BJ (cell line): ENCODE measurements at regions of chr14 and their contacts with region 1.

Region 1: GRCh38 chr14:22852940-22853767 is 16.8 kb downstream of the MMP14 start:
- DNase-seq: peak; percentile 25
- H3K4me3 ChIP-seq: peak overlapping the region; percentile 47
- H3K27me3 ChIP-seq: no peaks in the 10 kb centered on the region
- CTCF ChIP-seq: peak; percentile 89

Region 2: GRCh38 chr14:22556990-22557623 is 296.0 kb before region 1 on chr14:
- CTCF ChIA-PET with region 1: interaction called, 36 read pairs
- POLR2A ChIA-PET with region 1: no interaction called
- DNase-seq: no peak
- H3K4me3 ChIP-seq: peak overlapping the region; percentile 22
- H3K27me3 ChIP-seq: no peaks in the 10 kb centered on the region
- CTCF ChIP-seq: peak; percentile 96

Region 3: GRCh38 chr14:22653012-22653621 is 200.0 kb before region 1 on chr14:
- CTCF ChIA-PET with region 1: interaction called, 69 read pairs
- POLR2A ChIA-PET with region 1: no interaction called
- DNase-seq: peak; percentile 26
- H3K4me3 ChIP-seq: no peak overlapping the region
- H3K27me3 ChIP-seq: no peaks in the 10 kb centered on the region
- CTCF ChIP-seq: peak; percentile 97

Region 4: GRCh38 chr14:22829661-22830442 is 23.3 kb before region 1 on chr14 and contains the start of gene MRPL52:
- CTCF ChIA-PET with region 1: interaction called, 246 read pairs
- POLR2A ChIA-PET with region 1: interaction called, 6 read pairs
- DNase-seq: peak; percentile 46
- H3K4me3 ChIP-seq: peak within 1 kb of the TSS; percentile 72
- H3K27me3 ChIP-seq: no peaks in the 10 kb centered on the region
- CTCF ChIP-seq: no peak
- polyA plus RNA-seq, gene MRPL52: 66.7 and 78.6 TPM in 2 replicates

Region 5: GRCh38 chr14:22865424-22866405 is 12.6 kb after region 1 on chr14:
- CTCF ChIA-PET with region 1: interaction called, 44 read pairs
- POLR2A ChIA-PET with region 1: no interaction called
- DNase-seq: no peak
- H3K4me3 ChIP-seq: no peak overlapping the region
- H3K27me3 ChIP-seq: no peaks in the 10 kb centered on the region; the same call in 1 of the 2 replicates
- CTCF ChIP-seq: no peak

Region 6: DNA sequence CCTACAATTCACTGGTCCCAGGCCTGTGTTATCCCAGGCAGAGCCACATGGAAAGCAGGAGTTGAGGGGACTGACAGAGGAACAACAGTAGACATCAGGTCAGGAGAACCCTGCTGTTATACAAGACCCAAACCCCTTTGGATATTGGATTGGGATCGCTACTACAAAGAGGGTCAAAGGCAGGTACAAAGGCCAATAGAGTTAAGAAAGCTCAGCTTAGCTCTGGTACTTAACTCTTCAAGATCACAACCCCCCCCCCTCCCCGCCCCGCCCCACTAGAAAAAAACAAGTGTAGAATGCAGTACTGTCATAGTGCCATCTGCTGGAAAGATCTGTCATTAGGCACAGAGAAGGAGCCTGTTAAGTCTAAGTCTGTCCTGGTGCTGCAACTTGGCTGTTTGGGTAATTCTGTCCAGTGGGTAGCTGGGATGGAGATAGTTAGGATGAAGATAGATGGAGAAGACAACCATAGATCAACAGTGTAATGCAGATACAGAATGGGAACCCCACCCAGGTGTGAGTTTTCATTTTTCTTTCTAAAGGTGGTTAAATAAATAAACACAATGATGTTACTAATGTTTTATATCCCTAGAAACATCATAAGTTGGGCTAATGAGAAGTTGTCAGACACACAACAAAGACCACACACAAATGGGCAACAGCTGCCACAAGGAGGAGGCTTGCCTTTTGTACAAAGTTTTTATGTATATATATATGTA is 47.1 kb after region 1 on chr14:
- CTCF ChIA-PET with region 1: interaction called, 10 read pairs
- POLR2A ChIA-PET with region 1: no interaction called
- DNase-seq: no peak
- H3K4me3 ChIP-seq: no peak overlapping the region
- H3K27me3 ChIP-seq: no peaks in the 10 kb centered on the region
- CTCF ChIP-seq: peak; percentile 73